ENCODE measurements at regions of chr18 and their contacts with region 1.

Region 1: GRCh38 chr18:623761-624620 is 27.2 kb downstream of the CLUL1 start:
- DNase-seq: peak; percentile 89
- H3K4me3 ChIP-seq: no peak overlapping the region
- H3K27ac ChIP-seq: no peak overlapping the region
- H3K4me1 ChIP-seq: no peaks in the 10 kb centered on the region
- H3K27me3 ChIP-seq: no peaks in the 10 kb centered on the region
- CTCF ChIP-seq: peak in 2 of 3 experiments; percentile 30 to 66
- POLR2A ChIP-seq: no peak

Region 2: GRCh38 chr18:666177-666576 is 42.2 kb after region 1 on chr18:
- intact Hi-C with region 1: no loop called
- DNase-seq: no peak
- H3K4me3 ChIP-seq: no peak overlapping the region
- H3K27ac ChIP-seq: no peak overlapping the region
- H3K4me1 ChIP-seq: no peaks in the 10 kb centered on the region
- H3K27me3 ChIP-seq: no peaks in the 10 kb centered on the region
- CTCF ChIP-seq: no peak
- POLR2A ChIP-seq: no peak

Region 3: DNA sequence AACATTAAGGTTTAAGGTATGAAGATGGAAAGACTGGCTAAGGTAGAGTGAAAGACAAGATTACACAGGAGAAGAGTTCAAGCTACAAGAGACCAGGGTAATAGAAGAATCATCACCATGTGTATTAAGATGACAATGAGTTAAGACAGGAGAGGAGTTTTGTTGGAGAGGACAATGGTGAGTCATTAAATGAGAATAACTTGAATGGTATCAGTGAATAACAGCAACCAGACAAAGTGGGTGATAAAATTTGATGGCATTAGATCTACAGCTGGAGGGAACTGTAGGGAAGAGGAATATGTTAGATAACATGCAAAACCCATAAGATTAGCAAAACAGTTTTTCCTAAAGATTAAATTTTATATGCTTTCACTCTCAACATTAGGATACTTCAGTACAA is 107.2 kb after region 1 on chr18:
- intact Hi-C with region 1: loop called (anchors 10 kb)
- DNase-seq: no peak
- H3K4me3 ChIP-seq: no peak overlapping the region
- H3K27ac ChIP-seq: no peak overlapping the region
- H3K4me1 ChIP-seq: no peaks in the 10 kb centered on the region
- H3K27me3 ChIP-seq: no peaks in the 10 kb centered on the region
- CTCF ChIP-seq: no peak
- POLR2A ChIP-seq: no peak

Region 4: GRCh38 chr18:839224-840022 is 215.4 kb after region 1 on chr18:
- intact Hi-C with region 1: loop called (anchors 10 kb)
- DNase-seq: peak; percentile 96
- H3K4me3 ChIP-seq: peak overlapping the region; percentile 9 to 26
- H3K27ac ChIP-seq: peak overlapping the region; percentile 26 to 40
- H3K4me1 ChIP-seq: peaks cover 8% of the 10 kb centered on the region
- H3K27me3 ChIP-seq: no peaks in the 10 kb centered on the region
- CTCF ChIP-seq: peak; percentile 91 to 98 (median 97)
- POLR2A ChIP-seq: no peak

Measured in testis (tissue), 5 donors.